ENCODE measurements at regions of chr3 and their contacts with region 1.

Region 1: GRCh38 chr3:196568246-196569002 is at the starts of genes FBXO45 and WDR53:
- DNase-seq: peak; percentile 97
- ATAC-seq: peak; percentile 90
- H3K4me3 ChIP-seq: peak within 1 kb of the TSS; percentile 89 to 99 (median 97)
- H3K4me3 Mint-ChIP-seq: peak within 1 kb of the TSS; percentile 98
- H3K27ac ChIP-seq: peak within 1 kb of the TSS; percentile 74 to 94
- H3K27ac Mint-ChIP-seq: peak within 1 kb of the TSS; percentile 95
- H3K4me1 ChIP-seq: peaks cover 17 to 21% of the 10 kb centered on the region in 2 donors
- H3K4me1 Mint-ChIP-seq: peaks cover 28% of the 10 kb centered on the region
- H3K27me3 ChIP-seq: no peaks in the 10 kb centered on the region
- H3K27me3 Mint-ChIP-seq: no peaks in the 10 kb centered on the region
- CTCF ChIP-seq: no peak
- total RNA-seq, gene FBXO45: 4.7 and 5.2 TPM in 2 replicates
- total RNA-seq, gene WDR53: 18.2 and 21.0 TPM in 2 replicates

Region 2: DNA sequence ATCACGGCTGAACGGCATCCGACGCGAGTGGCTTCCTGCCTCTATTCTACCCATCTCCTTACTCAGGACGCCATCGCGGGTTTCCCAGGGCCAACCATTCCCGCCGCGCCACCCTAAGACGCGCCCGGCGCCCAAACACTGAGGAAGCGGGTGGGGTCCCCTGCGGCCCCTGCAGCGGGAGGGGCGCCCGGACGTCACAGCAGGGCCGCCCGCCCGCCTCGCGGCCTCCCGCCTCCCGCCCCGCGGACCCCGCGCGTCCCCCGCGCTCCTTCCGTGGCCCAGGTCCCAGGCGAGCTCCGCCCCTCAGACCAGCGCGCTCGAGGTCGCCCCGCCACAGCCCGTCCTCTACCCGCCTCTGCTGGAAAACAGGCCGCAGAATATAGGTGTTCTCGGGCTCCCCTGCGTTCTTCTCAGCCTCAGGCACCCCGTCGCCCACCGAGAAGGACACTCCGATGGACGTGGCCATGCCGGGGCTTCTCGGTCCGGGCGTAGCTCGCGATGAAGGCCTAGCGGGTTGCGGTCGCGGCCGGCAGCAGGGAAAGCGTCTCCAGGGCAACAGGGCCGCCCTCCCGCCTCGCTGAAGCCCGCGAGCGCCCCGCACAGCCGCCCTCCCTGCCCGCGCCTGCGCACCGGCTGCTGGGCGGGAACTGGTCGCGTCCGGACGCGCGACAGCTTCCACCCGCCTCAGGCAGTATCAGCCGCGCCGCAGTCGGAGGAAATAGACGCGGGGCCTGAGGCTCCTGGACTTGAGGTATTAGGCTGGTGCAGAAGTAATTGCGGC is 250.5 kb before region 1 on chr3 and contains the start of gene DYNLT2B:
- CTCF ChIA-PET with region 1: no interaction called
- POLR2A ChIA-PET with region 1: no interaction called
- intact Hi-C with region 1: loop called (anchors 2 kb)
- DNase-seq: peak; percentile 93
- ATAC-seq: peak; percentile 91
- H3K4me3 ChIP-seq: peak within 1 kb of the TSS; percentile 44 to 85 (median 76)
- H3K4me3 Mint-ChIP-seq: peak within 1 kb of the TSS; percentile 96
- H3K27ac ChIP-seq: peak within 1 kb of the TSS; percentile 85 to 89
- H3K27ac Mint-ChIP-seq: peak within 1 kb of the TSS; percentile 97
- H3K4me1 ChIP-seq: peaks cover 0 to 10% of the 10 kb centered on the region in 2 donors
- H3K4me1 Mint-ChIP-seq: peaks cover 10% of the 10 kb centered on the region
- H3K27me3 ChIP-seq: no peaks in the 10 kb centered on the region
- H3K27me3 Mint-ChIP-seq: no peaks in the 10 kb centered on the region
- CTCF ChIP-seq: no peak
- total RNA-seq, gene DYNLT2B: 5.6 and 6.5 TPM in 2 replicates

Region 3: DNA sequence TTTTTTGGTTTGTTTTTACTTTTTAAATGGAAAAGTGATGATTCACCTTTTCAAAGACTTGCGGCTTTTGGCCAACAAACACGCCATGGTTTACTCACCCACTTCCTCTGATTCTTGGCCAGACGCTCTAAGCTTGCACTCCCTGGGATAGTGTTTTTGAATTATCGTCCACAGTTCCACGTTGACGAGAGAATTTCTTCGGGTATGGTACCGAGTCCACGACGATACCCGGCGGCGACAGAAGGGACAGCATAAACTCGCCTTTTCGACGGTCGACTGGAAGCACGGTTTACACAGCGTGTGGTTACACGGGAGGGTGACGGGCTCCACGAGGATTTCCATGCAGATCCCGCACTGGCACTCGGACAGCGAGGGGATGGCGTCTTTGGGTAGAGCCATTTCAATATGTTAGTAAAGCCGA is 65.6 kb before region 1 on chr3:
- CTCF ChIA-PET with region 1: no interaction called
- POLR2A ChIA-PET with region 1: no interaction called
- intact Hi-C with region 1: loop called (anchors 1 kb)
- DNase-seq: peak; percentile 67
- ATAC-seq: peak; percentile 5
- H3K4me3 ChIP-seq: peak overlapping the region; percentile 79 to 87 (median 82)
- H3K4me3 Mint-ChIP-seq: peak overlapping the region; percentile 100
- H3K27ac ChIP-seq: peak overlapping the region; percentile 74 to 83
- H3K27ac Mint-ChIP-seq: peak overlapping the region; percentile 92
- H3K4me1 ChIP-seq: peaks cover 16 to 28% of the 10 kb centered on the region in 2 donors
- H3K4me1 Mint-ChIP-seq: peaks cover 38% of the 10 kb centered on the region
- H3K27me3 ChIP-seq: no peaks in the 10 kb centered on the region
- H3K27me3 Mint-ChIP-seq: no peaks in the 10 kb centered on the region
- CTCF ChIP-seq: no peak

Region 4: GRCh38 chr3:196537319-196537984 is 31.0 kb before region 1 on chr3:
- CTCF ChIA-PET with region 1: no interaction called
- POLR2A ChIA-PET with region 1: no interaction called
- intact Hi-C with region 1: loop called (anchors 1 kb)
- DNase-seq: peak; percentile 69
- ATAC-seq: no peak
- H3K4me3 ChIP-seq: no peak overlapping the region
- H3K4me3 Mint-ChIP-seq: no peak overlapping the region
- H3K27ac ChIP-seq: no peak overlapping the region
- H3K27ac Mint-ChIP-seq: no peak overlapping the region
- H3K4me1 ChIP-seq: no peaks in the 10 kb centered on the region
- H3K4me1 Mint-ChIP-seq: no peaks in the 10 kb centered on the region
- H3K27me3 ChIP-seq: no peaks in the 10 kb centered on the region
- H3K27me3 Mint-ChIP-seq: peaks cover 4% of the 10 kb centered on the region
- CTCF ChIP-seq: peak; percentile 86

Region 5: GRCh38 chr3:196711838-196712513 is 143.6 kb after region 1 on chr3 and contains the starts of genes CEP19 and PIGX:
- CTCF ChIA-PET with region 1: no interaction called
- POLR2A ChIA-PET with region 1: no interaction called
- intact Hi-C with region 1: loop called (anchors 1 kb)
- DNase-seq: peak; percentile 97
- ATAC-seq: peak; percentile 83
- H3K4me3 ChIP-seq: peak within 1 kb of the TSS; percentile 75 to 94 (median 87)
- H3K4me3 Mint-ChIP-seq: peak within 1 kb of the TSS; percentile 96
- H3K27ac ChIP-seq: peak within 1 kb of the TSS; percentile 91 to 96
- H3K27ac Mint-ChIP-seq: peak within 1 kb of the TSS; percentile 94
- H3K4me1 ChIP-seq: peaks cover 13 to 16% of the 10 kb centered on the region in 2 donors
- H3K4me1 Mint-ChIP-seq: peaks cover 14% of the 10 kb centered on the region
- H3K27me3 ChIP-seq: no peaks in the 10 kb centered on the region
- H3K27me3 Mint-ChIP-seq: no peaks in the 10 kb centered on the region
- CTCF ChIP-seq: no peak
- total RNA-seq, gene CEP19: 4.6 and 5.0 TPM in 2 replicates
- total RNA-seq, gene PIGX: 18.9 and 21.5 TPM in 2 replicates

Region 6: DNA sequence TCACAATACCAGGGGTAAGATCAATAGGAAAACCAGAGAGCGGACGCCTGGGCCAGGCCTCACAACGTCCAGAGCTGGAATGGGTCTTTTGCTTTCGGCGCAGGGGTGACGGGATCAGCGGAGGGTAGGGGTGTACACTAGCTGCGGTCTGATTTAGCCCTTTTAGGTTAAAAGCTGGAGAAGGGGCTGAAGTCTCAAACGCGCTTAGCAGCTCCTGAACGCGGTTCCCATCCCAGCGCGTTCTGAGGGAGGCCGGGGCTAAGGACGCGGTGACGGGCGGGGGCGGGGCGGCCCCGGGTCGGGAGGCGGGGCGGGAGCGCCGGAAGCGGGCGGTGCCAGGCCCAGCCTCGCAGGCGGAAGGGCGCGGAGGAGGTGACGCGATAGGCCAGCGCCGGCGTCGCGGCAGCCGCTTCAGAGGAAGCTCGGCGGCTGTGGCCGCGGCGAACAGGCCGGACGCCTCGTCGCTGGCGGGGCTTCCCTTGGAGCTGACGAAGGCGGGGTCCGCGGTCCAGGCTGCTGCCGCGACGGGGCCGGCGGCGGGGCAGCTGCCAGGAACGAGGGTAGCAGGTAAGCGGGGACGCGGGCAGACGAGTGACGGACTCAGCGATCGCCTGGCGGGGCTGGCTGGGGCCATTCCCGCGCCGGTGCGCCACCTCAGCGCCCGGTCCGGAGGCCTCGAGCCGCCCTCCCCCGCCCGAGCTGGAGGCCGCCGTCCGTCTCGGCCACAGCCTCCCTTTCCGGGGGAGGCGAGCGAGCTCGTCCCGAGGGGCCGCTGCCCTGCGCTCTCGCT is 299.3 kb after region 1 on chr3 and contains the start of gene SENP5:
- CTCF ChIA-PET with region 1: no interaction called
- POLR2A ChIA-PET with region 1: no interaction called
- intact Hi-C with region 1: loop called (anchors 2 kb)
- DNase-seq: peak; percentile 93
- ATAC-seq: peak; percentile 97
- H3K4me3 ChIP-seq: peak within 1 kb of the TSS; percentile 63 to 89 (median 77)
- H3K4me3 Mint-ChIP-seq: peak within 1 kb of the TSS; percentile 96
- H3K27ac ChIP-seq: peak within 1 kb of the TSS; percentile 77 to 95
- H3K27ac Mint-ChIP-seq: peak within 1 kb of the TSS; percentile 95
- H3K4me1 ChIP-seq: peaks cover 14 to 19% of the 10 kb centered on the region in 2 donors
- H3K4me1 Mint-ChIP-seq: peaks cover 29% of the 10 kb centered on the region
- H3K27me3 ChIP-seq: no peaks in the 10 kb centered on the region
- H3K27me3 Mint-ChIP-seq: no peaks in the 10 kb centered on the region
- CTCF ChIP-seq: no peak
- total RNA-seq, gene SENP5: 51.5 and 58.4 TPM in 2 replicates

Region 7: GRCh38 chr3:196969660-196970546 is 401.5 kb after region 1 on chr3:
- CTCF ChIA-PET with region 1: no interaction called
- POLR2A ChIA-PET with region 1: no interaction called
- intact Hi-C with region 1: loop called (anchors 1 kb)
- DNase-seq: peak; percentile 83
- ATAC-seq: peak; percentile 76
- H3K4me3 ChIP-seq: peak overlapping the region; percentile 46 to 82 (median 68)
- H3K4me3 Mint-ChIP-seq: peak overlapping the region; percentile 85
- H3K27ac ChIP-seq: no peak overlapping the region
- H3K27ac Mint-ChIP-seq: peak overlapping the region; percentile 81
- H3K4me1 ChIP-seq: peaks cover 5 to 11% of the 10 kb centered on the region in 2 donors
- H3K4me1 Mint-ChIP-seq: peaks cover 19% of the 10 kb centered on the region
- H3K27me3 ChIP-seq: peaks cover 0 to 4% (median 1%) of the 10 kb centered on the region in 4 experiments
- H3K27me3 Mint-ChIP-seq: peaks cover 9% of the 10 kb centered on the region
- CTCF ChIP-seq: peak; percentile 86